AG04449 (cell line): ENCODE measurements at regions of chr6 and their contacts with region 1.

Region 1: GRCh38 chr6:122839477-122839876 is 50.4 kb downstream of the SMPDL3A start:
- DNase-seq: no peak
- H3K4me3 ChIP-seq: no peak overlapping the region
- CTCF ChIP-seq: peak; percentile 60

Region 2: GRCh38 chr6:122722746-122723145 is 116.7 kb before region 1 on chr6:
- CTCF ChIA-PET with region 1: interaction called, 292 read pairs
- POLR2A ChIA-PET with region 1: no interaction called
- DNase-seq: peak; percentile 17
- H3K4me3 ChIP-seq: no peak overlapping the region
- CTCF ChIP-seq: no peak

Region 3: DNA sequence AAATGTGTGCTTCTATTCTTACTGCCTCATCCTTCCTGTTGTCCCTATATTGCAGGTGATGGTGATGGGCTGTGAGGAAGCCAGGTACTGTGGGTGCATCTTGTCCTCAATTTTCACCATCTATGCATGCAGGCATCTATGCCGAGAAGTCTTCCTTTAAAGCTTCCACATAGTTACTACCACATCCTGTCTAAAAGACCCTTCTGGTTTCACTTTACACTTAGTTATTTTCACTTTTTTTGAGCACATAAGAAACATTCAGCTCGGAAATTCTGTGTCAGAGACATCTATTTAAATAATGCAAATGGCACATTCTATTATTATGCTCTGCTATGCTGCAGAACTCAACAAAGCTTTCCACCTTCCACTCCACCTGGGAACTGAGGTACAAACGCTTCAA is 88.2 kb before region 1 on chr6:
- CTCF ChIA-PET with region 1: interaction called, 106 read pairs
- POLR2A ChIA-PET with region 1: no interaction called
- DNase-seq: no peak
- H3K4me3 ChIP-seq: no peak overlapping the region
- CTCF ChIP-seq: no peak

Region 4: GRCh38 chr6:122798099-122798641 is 41.3 kb before region 1 on chr6:
- CTCF ChIA-PET with region 1: interaction called, 26 read pairs
- POLR2A ChIA-PET with region 1: no interaction called
- DNase-seq: no peak
- H3K4me3 ChIP-seq: no peak overlapping the region
- CTCF ChIP-seq: no peak

Region 5: GRCh38 chr6:122853259-122853995 is 13.9 kb after region 1 on chr6:
- CTCF ChIA-PET with region 1: interaction called, 10 read pairs
- POLR2A ChIA-PET with region 1: no interaction called
- DNase-seq: no peak
- H3K4me3 ChIP-seq: no peak overlapping the region
- CTCF ChIP-seq: no peak